ENCODE measurements at regions of chr3 and their contacts with region 1.

Region 1: DNA sequence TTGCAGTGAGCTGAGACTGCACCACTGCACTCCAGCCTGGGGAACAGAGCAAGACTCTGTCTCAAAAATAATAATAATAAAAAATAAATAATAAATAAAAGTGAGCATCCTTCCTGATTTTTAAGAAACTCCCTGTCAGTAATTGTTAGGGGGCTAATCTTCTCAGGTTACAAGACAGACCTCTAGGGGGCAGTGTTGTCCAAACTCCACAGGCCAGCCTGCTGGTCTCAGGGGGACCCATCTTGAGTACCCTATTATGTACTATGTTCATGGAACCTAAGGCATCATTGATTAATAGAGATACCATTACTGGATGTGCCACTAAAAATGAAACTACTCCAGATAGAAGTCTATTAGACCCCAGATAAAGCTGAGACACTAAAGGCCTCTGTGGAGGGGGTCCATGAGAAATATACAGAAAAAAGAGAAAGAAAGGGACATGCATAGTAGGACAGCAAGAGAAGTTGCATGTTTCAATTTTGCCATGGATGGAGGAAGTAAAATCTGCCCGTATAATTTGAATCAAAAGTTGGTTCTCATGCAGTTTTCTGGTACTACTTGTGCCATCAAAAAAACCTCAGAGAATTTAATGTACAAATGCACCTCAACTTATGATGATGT is 85.5 kb upstream of the CDV3 start:
- DNase-seq: peak; percentile 72
- H3K4me3 Mint-ChIP-seq: no peak overlapping the region
- H3K27ac Mint-ChIP-seq: no peak overlapping the region
- H3K4me1 Mint-ChIP-seq: peaks cover 49% of the 10 kb centered on the region
- H3K27me3 Mint-ChIP-seq: no peaks in the 10 kb centered on the region

Region 2: DNA sequence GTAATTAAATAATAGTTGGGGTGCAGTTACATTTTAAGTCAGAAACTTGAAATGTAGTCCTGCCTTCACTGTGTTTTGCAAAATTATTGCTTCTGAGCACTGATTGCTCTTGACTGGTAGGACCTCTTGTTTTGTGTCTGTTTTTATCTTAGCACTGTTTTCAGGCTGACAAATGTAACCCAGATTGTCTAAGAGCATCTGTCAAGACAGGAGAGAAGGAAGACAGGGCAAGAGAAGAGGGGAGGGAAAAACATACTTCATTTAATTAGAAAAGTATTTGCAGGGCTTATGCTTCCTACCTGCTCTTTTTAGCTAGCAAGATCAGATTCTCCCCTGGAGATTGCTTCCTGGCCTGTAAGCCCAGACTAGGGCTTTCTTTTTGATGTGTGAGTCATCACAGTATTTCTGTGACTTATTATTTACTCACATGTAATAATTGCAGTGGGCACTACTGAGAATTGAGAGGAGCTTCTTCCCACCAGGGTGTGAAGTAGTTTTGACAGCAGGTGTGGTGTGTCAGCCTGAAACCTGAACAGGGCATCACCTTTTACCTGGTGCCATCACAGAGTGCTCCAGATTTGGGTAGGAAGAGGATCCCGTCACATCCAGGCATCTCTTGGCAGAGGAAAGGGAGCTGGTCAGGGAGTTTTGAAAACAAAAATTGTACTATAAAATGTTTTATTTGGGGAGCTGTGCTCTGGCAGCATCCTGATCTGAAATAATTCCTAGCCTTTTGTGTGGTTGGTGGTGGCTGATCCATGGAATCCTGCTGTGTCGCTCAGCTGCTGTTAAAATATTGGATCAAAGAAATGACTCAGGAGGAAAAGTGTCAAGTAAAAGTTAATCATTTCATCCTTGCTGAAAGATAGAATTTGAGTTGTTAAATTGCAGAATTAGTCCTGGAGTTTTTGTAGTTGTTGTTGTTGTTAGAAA is 351.6 kb before region 1 on chr3:
- CTCF ChIA-PET with region 1: no interaction called
- intact Hi-C with region 1: no loop called
- DNase-seq: no peak
- H3K4me3 Mint-ChIP-seq: no peak overlapping the region
- H3K27ac Mint-ChIP-seq: no peak overlapping the region
- H3K4me1 Mint-ChIP-seq: no peaks in the 10 kb centered on the region
- H3K27me3 Mint-ChIP-seq: peaks cover 10% of the 10 kb centered on the region

Region 3: DNA sequence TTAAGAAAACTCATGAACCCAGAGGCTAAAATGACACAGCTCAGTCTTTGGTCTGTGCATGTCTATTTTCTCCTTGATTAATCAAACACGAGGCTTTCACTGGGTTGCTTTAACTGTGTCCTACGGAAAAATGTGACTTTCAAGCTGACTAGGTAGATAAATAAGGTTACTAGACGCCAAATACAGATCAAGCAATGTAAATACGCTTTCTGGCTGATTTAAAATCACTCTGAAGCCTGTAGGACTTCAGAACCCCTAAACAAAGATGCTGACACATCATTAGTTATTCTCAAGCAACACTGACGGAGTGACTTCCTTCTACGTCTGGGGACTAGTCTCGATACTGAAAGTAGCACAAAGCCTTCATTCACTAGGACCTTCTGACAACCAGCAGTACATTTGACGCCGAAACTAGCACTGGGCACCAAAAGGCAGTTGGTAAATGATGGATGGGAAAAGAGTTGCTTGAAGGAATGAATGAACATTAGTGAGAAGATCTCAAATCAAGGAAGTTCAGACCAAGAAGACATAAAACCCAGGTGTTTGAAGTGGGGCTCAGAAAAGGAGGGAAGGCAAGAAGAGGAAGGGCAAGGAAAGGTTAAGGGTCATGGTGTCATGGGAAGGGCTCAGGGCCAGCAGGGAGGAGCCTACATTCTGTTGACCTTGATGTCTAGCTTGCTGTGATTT is 18.3 kb after region 1 on chr3:
- CTCF ChIA-PET with region 1: interaction called, 13 read pairs
- intact Hi-C with region 1: loop called (anchors 1 kb)
- DNase-seq: peak; percentile 59
- H3K4me3 Mint-ChIP-seq: peak overlapping the region; percentile 54
- H3K27ac Mint-ChIP-seq: peak overlapping the region; percentile 67
- H3K4me1 Mint-ChIP-seq: peaks cover 11% of the 10 kb centered on the region
- H3K27me3 Mint-ChIP-seq: no peaks in the 10 kb centered on the region

Region 4: DNA sequence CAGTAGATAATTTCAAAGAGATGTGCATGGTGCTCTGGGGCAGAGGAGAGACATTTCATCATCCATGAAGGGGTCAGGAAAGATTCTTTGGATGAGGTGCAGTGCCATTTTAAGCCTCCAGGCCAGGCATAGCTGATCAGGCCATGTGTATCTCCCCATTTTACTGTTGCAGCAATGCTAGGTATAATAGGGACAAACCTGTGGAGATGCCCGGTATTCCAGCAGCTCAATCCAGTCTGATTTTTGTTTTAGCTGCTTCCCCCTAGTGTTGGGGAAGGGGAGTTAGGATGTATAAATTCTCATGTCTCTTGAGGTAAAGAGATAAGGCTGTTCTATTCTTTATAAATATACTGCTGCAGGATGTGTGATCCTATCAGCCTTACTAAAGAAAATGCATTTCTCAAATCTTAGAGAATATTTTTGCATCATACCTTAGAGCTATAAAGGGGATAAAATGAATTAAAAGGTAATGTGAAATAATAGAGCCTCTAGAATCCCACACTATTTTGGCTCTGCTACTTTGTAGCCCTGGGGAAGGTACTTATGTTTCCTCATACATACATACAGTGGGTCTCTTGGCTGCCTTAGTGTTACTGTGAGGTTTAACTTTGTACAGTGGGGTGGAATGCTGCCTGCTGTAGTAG is 90.6 kb after region 1 on chr3:
- CTCF ChIA-PET with region 1: interaction called, 72 read pairs
- intact Hi-C with region 1: loop called (anchors 1 kb)
- DNase-seq: no peak
- H3K4me3 Mint-ChIP-seq: peak overlapping the region; percentile 86
- H3K27ac Mint-ChIP-seq: peak overlapping the region; percentile 79
- H3K4me1 Mint-ChIP-seq: peaks cover 56% of the 10 kb centered on the region
- H3K27me3 Mint-ChIP-seq: no peaks in the 10 kb centered on the region

Region 5: GRCh38 chr3:133661454-133662277 is 173.6 kb after region 1 on chr3 and contains the start of gene TOPBP1:
- CTCF ChIA-PET with region 1: interaction called, 4 read pairs
- intact Hi-C with region 1: loop called (anchors 2 kb)
- DNase-seq: peak; percentile 94
- H3K4me3 Mint-ChIP-seq: peak within 1 kb of the TSS; percentile 98
- H3K27ac Mint-ChIP-seq: peak within 1 kb of the TSS; percentile 98
- H3K4me1 Mint-ChIP-seq: peaks cover 28% of the 10 kb centered on the region
- H3K27me3 Mint-ChIP-seq: no peaks in the 10 kb centered on the region
- total RNA-seq, gene TOPBP1: 65.4 to 65.8 TPM

Measured in activated naive CD4-positive, alpha-beta T cell treated with anti-CD3 and anti-CD28 coated beads for 36 hours (primary cell).